ENCODE measurements at regions of chr2 and their contacts with region 1.

Region 1: DNA sequence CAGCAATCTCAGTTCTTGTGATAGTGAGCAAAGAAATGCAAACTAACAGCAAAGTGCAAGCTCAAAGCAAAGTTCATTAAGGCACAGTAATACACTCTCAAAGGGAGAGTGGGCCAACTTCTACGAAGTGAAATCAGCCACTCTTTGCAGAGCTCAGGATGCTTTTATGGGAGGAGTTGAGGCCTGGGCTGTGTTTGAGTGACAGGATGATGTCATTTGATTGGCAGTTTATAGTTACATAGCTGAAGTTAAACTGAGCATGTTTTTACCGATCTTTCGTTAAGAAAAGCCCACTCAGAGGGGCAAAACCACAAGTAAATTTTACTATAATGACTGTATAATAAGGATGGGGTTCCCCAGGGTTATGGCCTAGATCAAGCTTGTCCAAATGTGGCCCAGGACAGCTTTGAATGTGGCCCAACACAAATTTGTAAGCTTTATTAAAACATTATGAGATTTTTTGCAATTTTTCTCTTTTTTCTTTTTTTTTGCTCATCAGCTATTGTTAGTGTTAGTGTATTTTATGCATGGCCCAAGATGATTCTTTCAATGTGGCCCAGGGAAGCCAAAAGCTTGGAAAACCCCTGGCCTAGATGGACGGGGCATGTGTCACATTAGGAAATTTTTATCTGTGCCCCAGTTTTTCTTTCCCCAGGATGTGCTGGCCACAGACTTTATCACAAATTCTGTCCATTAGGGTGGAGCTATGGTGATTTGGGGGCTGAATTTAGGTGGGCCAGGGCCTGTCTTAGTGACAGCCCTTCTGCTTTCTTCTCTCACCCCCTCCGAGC is 8.3 kb upstream of the DNAH7 start:
- DNase-seq: no peak
- H3K4me3 ChIP-seq: no peak overlapping the region
- H3K27ac ChIP-seq: no peak overlapping the region
- H3K4me1 ChIP-seq: peaks cover 5% of the 10 kb centered on the region
- CTCF ChIP-seq: no peak

Region 2: GRCh38 chr2:196131384-196131937 is 54.5 kb after region 1 on chr2:
- CTCF ChIA-PET with region 1: no interaction called
- POLR2A ChIA-PET with region 1: interaction called, 5 read pairs
- intact Hi-C with region 1: loop called (anchors 2 kb)
- DNase-seq: peak; percentile 86
- H3K4me3 ChIP-seq: no peak overlapping the region
- H3K27ac ChIP-seq: peak overlapping the region; percentile 41
- H3K4me1 ChIP-seq: peaks cover 5% of the 10 kb centered on the region
- CTCF ChIP-seq: peak; percentile 92

Region 3: GRCh38 chr2:196271795-196272194 is 194.8 kb after region 1 on chr2:
- CTCF ChIA-PET with region 1: no interaction called
- POLR2A ChIA-PET with region 1: no interaction called
- intact Hi-C with region 1: no loop called
- DNase-seq: no peak
- H3K4me3 ChIP-seq: no peak overlapping the region
- H3K27ac ChIP-seq: peak overlapping the region; percentile 100
- H3K4me1 ChIP-seq: peaks cover 99% of the 10 kb centered on the region
- CTCF ChIP-seq: no peak

Region 4: DNA sequence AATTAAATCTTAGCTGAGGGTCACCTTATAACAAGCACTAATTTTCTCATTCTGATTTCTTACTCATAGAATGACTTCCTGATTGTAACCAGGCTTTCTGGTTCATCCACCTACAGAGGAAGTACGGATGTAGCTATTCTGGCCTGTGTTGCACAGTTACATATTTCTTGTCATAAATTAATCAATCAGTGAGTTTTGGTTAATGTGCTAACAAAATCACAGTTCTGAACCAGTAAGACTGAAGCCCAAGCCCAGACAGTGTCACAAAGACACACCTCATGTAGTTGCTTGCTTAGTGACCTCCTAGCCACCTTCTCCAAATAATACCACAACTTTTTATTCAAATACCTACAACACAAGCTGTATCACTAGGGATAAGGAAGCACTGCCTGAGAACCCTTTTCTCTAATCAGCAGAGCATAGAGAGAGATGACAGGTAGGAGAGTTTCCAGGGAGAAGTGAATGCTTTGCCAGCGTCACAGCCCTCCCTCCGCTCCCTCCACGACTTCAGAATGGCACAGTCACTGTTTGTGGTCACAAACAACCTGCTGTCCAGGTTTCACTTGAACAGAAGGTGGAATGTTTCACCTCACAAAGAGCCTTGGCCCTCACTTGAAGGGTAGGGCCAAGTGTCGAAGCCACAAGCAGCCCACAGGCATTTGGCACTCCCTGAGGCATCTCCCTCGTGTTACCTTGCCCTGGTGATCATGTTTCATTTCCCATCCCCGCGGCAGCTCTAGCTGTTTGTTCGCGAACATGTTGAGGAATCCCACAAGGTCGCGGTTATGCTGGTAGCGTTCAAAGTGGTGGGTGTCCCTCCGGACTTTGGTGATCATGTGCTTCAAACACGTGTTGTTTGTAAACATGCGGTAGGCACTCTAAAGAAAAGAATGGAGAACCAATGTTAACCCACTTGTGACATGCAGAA is 215.2 kb after region 1 on chr2:
- CTCF ChIA-PET with region 1: no interaction called
- POLR2A ChIA-PET with region 1: interaction called, 3 read pairs
- intact Hi-C with region 1: loop called (anchors 5 kb)
- DNase-seq: no peak
- H3K4me3 ChIP-seq: no peak overlapping the region
- H3K27ac ChIP-seq: no peak overlapping the region
- H3K4me1 ChIP-seq: peaks cover 12% of the 10 kb centered on the region
- CTCF ChIP-seq: no peak

Region 5: GRCh38 chr2:196337208-196337953 is 260.4 kb after region 1 on chr2:
- CTCF ChIA-PET with region 1: interaction called, 9 read pairs
- POLR2A ChIA-PET with region 1: interaction called, 3 read pairs
- intact Hi-C with region 1: loop called (anchors 1 kb)
- DNase-seq: peak; percentile 49
- H3K4me3 ChIP-seq: no peak overlapping the region
- H3K27ac ChIP-seq: no peak overlapping the region
- H3K4me1 ChIP-seq: no peaks in the 10 kb centered on the region
- CTCF ChIP-seq: peak; percentile 74; the same call in 1 of the 2 replicates

Region 6: GRCh38 chr2:196453613-196454047 is 376.7 kb after region 1 on chr2:
- CTCF ChIA-PET with region 1: interaction called, 5 read pairs
- POLR2A ChIA-PET with region 1: interaction called, 4 read pairs
- intact Hi-C with region 1: loop called (anchors 2 kb)
- DNase-seq: peak; percentile 47
- H3K4me3 ChIP-seq: no peak overlapping the region
- H3K27ac ChIP-seq: no peak overlapping the region
- H3K4me1 ChIP-seq: no peaks in the 10 kb centered on the region
- CTCF ChIP-seq: peak; percentile 85